Ascending aorta (tissue), 2 donors: ENCODE measurements at regions of chr9 and their contacts with region 1.

Region 1: DNA sequence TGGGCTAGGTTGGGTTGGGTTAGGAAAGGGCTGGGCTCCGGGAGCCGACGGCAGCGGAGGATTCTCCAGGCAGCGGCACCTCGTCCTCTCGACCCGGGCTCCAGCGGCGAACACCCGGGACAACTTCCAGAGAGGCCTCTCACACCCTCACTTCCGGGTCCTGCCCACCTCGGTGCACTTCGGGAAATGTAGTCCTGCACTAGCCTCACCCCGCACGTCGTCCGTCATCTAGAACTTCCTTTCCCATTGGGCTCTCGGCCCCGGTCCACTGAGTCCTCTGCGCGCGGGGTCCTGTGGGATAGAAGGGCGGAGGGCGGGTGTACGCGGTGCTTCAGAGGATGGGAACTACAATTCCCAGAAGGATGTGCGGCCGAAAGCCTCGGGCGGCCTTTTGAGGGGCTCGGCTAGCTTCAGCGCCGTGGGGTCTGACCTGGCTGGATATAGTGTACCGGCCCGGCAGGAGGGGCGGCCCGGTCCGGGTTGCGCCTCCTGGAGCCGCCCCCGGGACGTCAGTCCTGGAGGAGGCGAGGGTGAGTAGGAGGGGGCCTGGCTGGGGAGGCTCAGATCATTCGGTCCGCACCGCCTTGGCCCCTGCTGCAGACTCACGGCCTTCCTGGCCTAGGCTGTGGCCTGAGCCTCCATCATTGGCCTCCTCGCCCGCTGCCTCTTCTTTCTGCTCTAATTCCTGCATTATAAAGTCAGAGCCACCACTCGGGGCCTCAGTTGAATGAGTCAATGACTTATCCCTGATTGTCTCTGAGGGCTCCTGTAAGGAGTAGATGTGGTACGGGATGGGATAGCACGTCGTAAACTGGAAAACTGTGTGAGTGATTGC is at the starts of genes ERP44 and INVS:
- DNase-seq: peak; percentile 98 to 100
- H3K4me3 ChIP-seq: peak within 1 kb of the TSS; percentile 62 to 77
- H3K27ac ChIP-seq: peak within 1 kb of the TSS; percentile 79 to 81
- H3K4me1 ChIP-seq: peaks cover 0 to 16% of the 10 kb centered on the region in 2 donors
- H3K27me3 ChIP-seq: no peaks in the 10 kb centered on the region
- CTCF ChIP-seq: no peak
- total RNA-seq, gene ERP44: 10.7 TPM
- total RNA-seq, gene INVS: 8.5 TPM

Region 2: GRCh38 chr9:99221621-99222415 is 877.3 kb before region 1 on chr9 and contains the starts of genes ALG2 and SEC61B:
- intact Hi-C with region 1: loop called (anchors 5 kb)
- DNase-seq: peak; percentile 70 to 96
- H3K4me3 ChIP-seq: peak within 1 kb of the TSS; percentile 94 to 99
- H3K27ac ChIP-seq: peak within 1 kb of the TSS; percentile 88 to 93
- H3K4me1 ChIP-seq: peaks cover 13 to 28% of the 10 kb centered on the region in 2 donors
- H3K27me3 ChIP-seq: no peaks in the 10 kb centered on the region
- CTCF ChIP-seq: peak in 1 of 3 experiments; percentile 13
- total RNA-seq, gene ALG2: 17.1 TPM
- total RNA-seq, gene SEC61B: 88.7 TPM